GM12878 (cell line): ENCODE measurements at regions of chr22 and their contacts with region 1.

Region 1: DNA sequence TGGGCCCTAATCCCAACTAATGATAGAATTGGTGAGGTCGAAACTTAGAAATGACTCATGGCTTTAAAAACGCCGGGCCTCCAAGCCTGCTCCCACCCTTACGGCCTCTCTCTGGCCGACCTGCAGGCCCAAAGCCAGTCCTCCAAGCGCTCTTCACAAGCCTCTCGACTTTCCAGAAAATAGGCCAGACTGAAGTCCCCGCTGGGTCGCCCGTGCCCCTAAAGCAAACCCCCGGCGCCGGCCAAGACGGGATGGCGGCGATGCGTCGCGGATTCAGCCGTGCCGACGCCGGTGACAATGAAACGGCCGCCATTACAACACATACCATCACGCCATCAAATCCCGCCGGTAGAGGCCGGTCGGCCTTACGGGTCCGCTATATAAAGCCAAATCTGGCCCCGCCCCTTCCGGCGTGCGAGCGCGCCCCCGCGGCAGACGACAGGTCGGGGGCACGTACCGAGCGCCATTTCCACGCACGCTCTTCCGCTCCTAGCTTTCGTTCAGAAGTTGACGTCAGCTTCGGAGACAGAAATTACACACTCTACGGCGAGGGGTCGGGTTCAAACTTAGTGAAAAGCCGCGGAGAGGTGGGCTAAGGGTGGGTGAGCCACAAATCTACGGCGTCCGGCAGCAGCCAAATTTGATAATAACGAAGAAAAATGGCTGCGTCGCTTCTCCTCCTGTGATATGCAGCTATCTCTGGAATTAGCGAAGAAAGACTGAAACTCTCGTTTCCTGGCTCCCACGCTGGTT is at the start of gene RPL3:
- DNase-seq: peak; percentile 97
- ATAC-seq: peak; percentile 83
- H3K4me3 ChIP-seq: peak within 1 kb of the TSS; percentile 85
- H3K27ac ChIP-seq: peak within 1 kb of the TSS; percentile 89
- H3K4me1 ChIP-seq: peaks cover 20% of the 10 kb centered on the region
- H3K27me3 ChIP-seq: no peaks in the 10 kb centered on the region
- CTCF ChIP-seq: peak in 2 of 3 experiments; percentile 7 to 8; a peak in 2 of 6 replicates
- EP300 ChIP-seq: 0 out of 4 replicates have a peak, but pooled peaks of 1 of the 2 experiments have one; percentile 2
- POLR2A ChIP-seq: peak; percentile 99
- RAD21 ChIP-seq: no peak
- polyA plus RNA-seq, gene RPL3: 4,597 to 6,791 TPM

Region 2: GRCh38 chr22:39135090-39135896 is 184.2 kb before region 1 on chr22:
- CTCF ChIA-PET with region 1: interaction called, 12 read pairs
- POLR2A ChIA-PET with region 1: interaction called, 3 read pairs
- RAD21 ChIA-PET with region 1: interaction called, 3 read pairs
- SMC1A ChIA-PET with region 1: interaction called, 4 read pairs
- in situ Hi-C with region 1: no loop called
- intact Hi-C with region 1: no loop called
- DNase-seq: no peak
- ATAC-seq: peak; percentile 96
- H3K4me3 ChIP-seq: no peak overlapping the region
- H3K27ac ChIP-seq: no peak overlapping the region
- H3K4me1 ChIP-seq: no peaks in the 10 kb centered on the region
- H3K27me3 ChIP-seq: no peaks in the 10 kb centered on the region
- CTCF ChIP-seq: peak; percentile 63 to 79 (median 68)
- EP300 ChIP-seq: no peak
- POLR2A ChIP-seq: no peak
- RAD21 ChIP-seq: peak; percentile 59

Region 3: DNA sequence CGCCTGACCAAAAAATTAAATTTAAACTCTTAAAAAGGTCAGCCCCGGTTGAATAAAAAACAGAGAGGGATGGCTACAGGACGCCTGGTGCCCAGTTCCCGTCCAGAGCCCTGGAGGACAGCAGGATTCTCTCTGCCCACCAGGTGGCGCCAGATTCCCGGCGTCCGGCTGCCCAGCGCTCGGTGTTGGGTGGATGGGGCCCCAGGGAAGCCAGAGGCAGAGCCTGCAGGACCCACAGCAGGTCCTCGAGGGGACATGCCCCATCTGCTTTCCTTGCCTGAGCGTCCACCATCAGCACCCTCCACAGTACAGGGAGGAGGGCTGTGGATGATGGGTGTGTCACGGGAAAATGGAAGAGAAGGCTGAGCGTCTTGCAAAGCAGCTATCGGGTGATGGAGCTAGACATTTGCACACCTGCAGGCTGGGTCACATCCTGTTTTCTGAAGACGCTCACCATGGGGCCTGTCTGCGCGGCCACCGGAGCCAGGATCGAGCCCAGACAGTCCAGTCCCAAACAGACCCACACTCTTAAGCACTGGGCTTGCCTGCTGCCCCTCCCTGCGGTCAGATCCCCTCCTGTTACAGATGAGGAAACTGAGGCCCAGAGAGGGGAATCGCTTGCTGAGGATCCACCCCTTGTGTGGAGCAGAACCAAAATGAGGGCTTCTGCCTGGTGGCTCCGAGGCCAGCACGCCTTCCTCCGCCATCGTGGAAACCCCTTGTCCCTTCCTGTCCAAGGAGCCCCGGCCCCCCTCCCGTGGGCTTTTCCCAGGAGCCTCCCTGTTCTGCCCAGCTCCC is 148.4 kb before region 1 on chr22:
- CTCF ChIA-PET with region 1: interaction called, 99 read pairs
- POLR2A ChIA-PET with region 1: interaction called, 12 read pairs
- RAD21 ChIA-PET with region 1: interaction called, 76 read pairs
- SMC1A ChIA-PET with region 1: interaction called, 70 read pairs
- in situ Hi-C with region 1: loop called (anchors 5 kb)
- intact Hi-C with region 1: no loop called
- DNase-seq: peak; percentile 53
- ATAC-seq: peak; percentile 96
- H3K4me3 ChIP-seq: no peak overlapping the region
- H3K27ac ChIP-seq: no peak overlapping the region
- H3K4me1 ChIP-seq: peaks cover 15% of the 10 kb centered on the region
- H3K27me3 ChIP-seq: no peaks in the 10 kb centered on the region; a peak in 1 of 4 replicates
- CTCF ChIP-seq: peak; percentile 90 to 94 (median 93); a peak in 5 of 6 replicates
- EP300 ChIP-seq: no peak
- POLR2A ChIP-seq: no peak
- RAD21 ChIP-seq: peak; percentile 95

Region 4: GRCh38 chr22:39306581-39307361 is 12.7 kb before region 1 on chr22:
- CTCF ChIA-PET with region 1: interaction called, 12 read pairs
- POLR2A ChIA-PET with region 1: interaction called, 8 read pairs
- RAD21 ChIA-PET with region 1: interaction called, 5 read pairs
- SMC1A ChIA-PET with region 1: interaction called, 5 read pairs
- in situ Hi-C with region 1: no loop called
- intact Hi-C with region 1: no loop called
- DNase-seq: no peak
- ATAC-seq: peak; percentile 39; the same call in 2 of the 3 replicates
- H3K4me3 ChIP-seq: no peak overlapping the region
- H3K27ac ChIP-seq: no peak overlapping the region
- H3K4me1 ChIP-seq: peaks cover 10% of the 10 kb centered on the region
- H3K27me3 ChIP-seq: no peaks in the 10 kb centered on the region
- CTCF ChIP-seq: peak; percentile 55 to 66 (median 57)
- EP300 ChIP-seq: no peak
- POLR2A ChIP-seq: no peak
- RAD21 ChIP-seq: peak; percentile 78

Region 5: DNA sequence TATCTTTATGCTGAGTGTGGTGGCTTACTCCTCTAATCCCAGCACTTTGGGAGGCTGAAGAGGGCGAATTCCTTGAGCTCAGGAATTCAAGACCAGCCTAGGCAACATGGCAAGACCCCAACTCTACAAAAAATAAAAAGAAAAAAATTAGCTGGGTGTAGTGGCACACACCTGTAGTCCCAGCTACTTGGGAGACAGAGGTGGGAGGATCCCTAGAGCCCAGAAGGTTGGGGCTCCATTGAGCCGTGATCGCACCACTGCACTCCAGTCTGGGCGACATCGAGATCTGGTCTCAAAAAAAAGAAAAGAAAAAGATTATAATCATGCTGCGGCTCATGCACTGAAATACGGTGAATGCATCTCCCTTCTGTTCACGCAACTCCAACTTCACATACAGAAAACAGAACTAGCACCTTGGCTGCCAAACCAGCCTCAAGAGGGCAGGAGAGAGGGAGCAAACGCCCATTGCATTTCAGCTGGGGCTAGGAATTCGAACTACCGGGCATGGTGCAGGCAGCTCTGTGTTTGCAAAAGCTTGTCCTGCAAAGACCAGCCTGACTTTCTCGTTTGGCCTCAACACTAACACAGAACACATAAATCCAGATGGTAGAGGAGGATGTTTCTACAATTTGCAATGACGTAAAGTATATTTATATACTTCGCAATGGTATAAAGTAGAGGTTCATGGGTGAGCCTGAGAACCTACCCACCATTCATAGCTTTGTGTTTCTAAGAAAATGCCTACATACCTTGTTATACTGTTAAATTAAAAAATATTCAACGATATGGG is 24.0 kb after region 1 on chr22:
- CTCF ChIA-PET with region 1: interaction called, 21 read pairs
- POLR2A ChIA-PET with region 1: interaction called, 10 read pairs
- RAD21 ChIA-PET with region 1: interaction called, 7 read pairs
- SMC1A ChIA-PET with region 1: interaction called, 3 read pairs
- in situ Hi-C with region 1: no loop called
- intact Hi-C with region 1: no loop called
- DNase-seq: peak; percentile 36
- ATAC-seq: peak; percentile 95
- H3K4me3 ChIP-seq: no peak overlapping the region
- H3K27ac ChIP-seq: no peak overlapping the region
- H3K4me1 ChIP-seq: no peaks in the 10 kb centered on the region
- H3K27me3 ChIP-seq: peaks cover 0 to 1% of the 10 kb centered on the region in 2 experiments; a peak in 2 of 4 replicates
- CTCF ChIP-seq: peak; percentile 77 to 89 (median 80)
- EP300 ChIP-seq: no peak
- POLR2A ChIP-seq: no peak
- RAD21 ChIP-seq: peak; percentile 72

Region 6: DNA sequence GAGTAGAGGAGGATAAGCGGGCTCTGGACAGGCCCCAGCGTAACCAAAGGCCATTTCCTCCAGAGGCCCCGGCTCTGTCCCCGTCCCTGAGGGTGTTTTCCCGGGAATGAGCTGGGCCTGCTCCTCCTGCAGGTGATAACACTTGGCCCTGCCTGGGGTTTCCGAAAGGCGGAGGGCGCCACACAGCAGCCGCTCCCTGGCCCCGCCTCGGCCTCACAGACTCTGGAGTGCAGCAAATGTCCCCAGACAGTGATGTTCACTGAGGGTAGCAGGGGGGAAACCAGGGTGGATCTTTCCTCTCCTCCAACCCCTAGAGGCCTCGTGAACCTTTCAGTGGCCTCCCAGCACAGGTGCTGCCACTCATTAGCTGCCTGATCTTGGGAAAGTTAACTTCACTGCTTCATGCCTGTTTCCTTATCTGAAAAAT is 126.9 kb after region 1 on chr22:
- CTCF ChIA-PET with region 1: interaction called, 3 read pairs
- POLR2A ChIA-PET with region 1: interaction called, 5 read pairs
- RAD21 ChIA-PET with region 1: interaction called, 5 read pairs
- SMC1A ChIA-PET with region 1: interaction called, 5 read pairs
- in situ Hi-C with region 1: no loop called
- intact Hi-C with region 1: loop called (anchors 2 kb)
- DNase-seq: peak; percentile 59
- ATAC-seq: peak; percentile 67
- H3K4me3 ChIP-seq: 0 out of 2 replicates have a peak overlapping the region, but pooled peaks have one; percentile 94
- H3K27ac ChIP-seq: peak overlapping the region; percentile 92
- H3K4me1 ChIP-seq: peaks cover 84% of the 10 kb centered on the region
- H3K27me3 ChIP-seq: no peaks in the 10 kb centered on the region
- CTCF ChIP-seq: peak in 2 of 3 experiments; percentile 13 to 43; a peak in 2 of 6 replicates
- EP300 ChIP-seq: no peak
- POLR2A ChIP-seq: no peak
- RAD21 ChIP-seq: no peak